ENCODE measurements at regions of chr6 and their contacts with region 1.

Region 1: DNA sequence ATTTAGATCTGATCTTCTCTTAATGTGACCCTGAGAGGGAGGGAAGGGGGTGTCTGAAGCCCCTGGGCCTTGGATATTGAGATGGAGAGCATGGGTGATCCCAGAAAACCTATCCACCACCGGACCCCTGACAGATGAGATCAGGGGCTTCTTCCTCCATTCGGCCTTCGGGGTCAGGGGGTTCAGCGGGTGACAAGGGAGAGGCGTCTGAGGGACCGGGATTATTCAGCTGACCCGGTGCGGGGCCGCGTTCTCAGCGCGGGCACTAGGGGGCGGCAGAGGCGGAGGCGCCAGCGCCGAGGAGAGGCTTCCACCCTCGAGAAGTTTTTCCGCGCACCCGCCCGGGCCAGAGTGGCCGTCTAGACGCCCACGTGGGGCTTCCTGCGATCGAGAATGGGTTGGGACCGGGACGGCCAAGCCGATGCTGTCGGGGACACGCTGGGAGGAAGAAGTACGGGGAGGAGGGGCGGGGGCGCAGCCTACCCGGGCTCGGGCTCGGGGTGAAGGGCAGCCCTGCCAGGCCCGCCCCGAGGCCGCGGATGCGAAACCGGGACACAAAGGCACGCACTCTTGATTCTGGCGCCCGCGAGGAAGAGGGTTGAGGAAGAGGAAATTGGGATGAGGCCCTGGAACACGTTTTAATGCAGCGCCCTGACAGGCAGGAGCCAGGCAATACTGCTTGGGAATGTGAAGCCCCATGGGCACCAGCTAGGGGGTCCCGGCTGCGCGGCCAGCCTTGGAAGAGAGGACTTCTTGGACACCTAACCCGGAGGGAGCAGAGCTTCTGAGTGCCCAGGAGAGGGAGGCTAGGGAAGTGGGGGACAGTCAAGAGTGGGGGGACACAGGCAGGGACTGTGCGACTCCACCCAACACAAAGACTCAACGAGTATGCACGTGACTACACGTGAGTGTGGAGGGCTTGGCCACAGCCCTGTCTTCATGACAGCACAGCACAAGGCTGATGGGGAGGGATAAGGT is 30.6 kb downstream of the COL11A2 start:
- DNase-seq: peak; percentile 83
- ATAC-seq: peak; percentile 97
- H3K4me3 Mint-ChIP-seq: peak overlapping the region; percentile 72
- H3K27ac Mint-ChIP-seq: peak overlapping the region; percentile 78
- H3K4me1 Mint-ChIP-seq: peaks cover 12% of the 10 kb centered on the region
- H3K27me3 Mint-ChIP-seq: peaks cover 2% of the 10 kb centered on the region
- CTCF ChIP-seq: peak; percentile 96

Region 2: DNA sequence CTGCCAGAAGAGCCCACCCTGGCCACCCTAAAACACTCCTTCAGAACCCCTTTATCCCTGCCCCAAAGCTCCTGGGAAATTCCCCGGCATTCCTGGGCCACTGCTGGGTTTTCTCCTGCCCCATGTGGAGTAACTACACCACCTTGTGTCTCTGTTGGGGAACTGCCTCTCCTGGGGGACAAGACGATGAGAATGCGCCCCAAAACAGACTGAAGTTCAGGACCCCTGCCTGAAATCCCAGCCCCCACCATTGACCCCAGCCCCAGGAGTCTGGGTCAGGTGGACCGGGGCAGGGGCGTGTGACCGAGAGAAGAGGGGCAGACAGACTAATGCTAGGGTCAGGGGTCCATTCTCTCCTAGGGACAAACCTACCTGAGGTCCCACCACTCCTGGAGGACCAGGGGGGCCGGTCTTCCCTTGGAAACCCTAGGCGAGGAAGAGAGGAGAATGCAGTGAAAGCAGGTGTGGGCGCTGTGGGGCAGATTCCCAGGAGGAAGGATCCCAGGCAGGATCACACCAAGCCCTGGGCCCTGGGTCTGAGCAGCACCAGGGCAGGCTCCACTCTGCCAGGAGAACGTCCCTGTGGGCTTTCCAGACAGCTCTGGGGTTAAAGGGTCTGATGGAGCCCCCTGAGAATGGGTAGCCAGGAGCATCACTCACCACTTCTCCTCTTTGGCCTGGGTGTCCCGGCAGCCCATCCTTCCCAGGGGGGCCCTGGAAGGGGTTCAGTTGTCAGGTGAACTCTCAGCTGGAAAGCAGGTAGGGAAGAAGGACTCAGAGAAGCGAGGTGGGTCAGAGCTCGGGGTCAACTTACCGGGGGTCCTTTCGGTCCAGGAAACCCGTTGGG is 11.3 kb after region 1 on chr6:
- CTCF ChIA-PET with region 1: interaction called, 11 read pairs
- POLR2A ChIA-PET with region 1: no interaction called
- intact Hi-C with region 1: no loop called
- DNase-seq: no peak
- ATAC-seq: peak; percentile 37
- H3K4me3 Mint-ChIP-seq: no peak overlapping the region
- H3K27ac Mint-ChIP-seq: no peak overlapping the region
- H3K4me1 Mint-ChIP-seq: no peaks in the 10 kb centered on the region
- H3K27me3 Mint-ChIP-seq: no peaks in the 10 kb centered on the region
- CTCF ChIP-seq: peak; percentile 30